ENCODE measurements at regions of chr20 and their contacts with region 1.

Region 1: DNA sequence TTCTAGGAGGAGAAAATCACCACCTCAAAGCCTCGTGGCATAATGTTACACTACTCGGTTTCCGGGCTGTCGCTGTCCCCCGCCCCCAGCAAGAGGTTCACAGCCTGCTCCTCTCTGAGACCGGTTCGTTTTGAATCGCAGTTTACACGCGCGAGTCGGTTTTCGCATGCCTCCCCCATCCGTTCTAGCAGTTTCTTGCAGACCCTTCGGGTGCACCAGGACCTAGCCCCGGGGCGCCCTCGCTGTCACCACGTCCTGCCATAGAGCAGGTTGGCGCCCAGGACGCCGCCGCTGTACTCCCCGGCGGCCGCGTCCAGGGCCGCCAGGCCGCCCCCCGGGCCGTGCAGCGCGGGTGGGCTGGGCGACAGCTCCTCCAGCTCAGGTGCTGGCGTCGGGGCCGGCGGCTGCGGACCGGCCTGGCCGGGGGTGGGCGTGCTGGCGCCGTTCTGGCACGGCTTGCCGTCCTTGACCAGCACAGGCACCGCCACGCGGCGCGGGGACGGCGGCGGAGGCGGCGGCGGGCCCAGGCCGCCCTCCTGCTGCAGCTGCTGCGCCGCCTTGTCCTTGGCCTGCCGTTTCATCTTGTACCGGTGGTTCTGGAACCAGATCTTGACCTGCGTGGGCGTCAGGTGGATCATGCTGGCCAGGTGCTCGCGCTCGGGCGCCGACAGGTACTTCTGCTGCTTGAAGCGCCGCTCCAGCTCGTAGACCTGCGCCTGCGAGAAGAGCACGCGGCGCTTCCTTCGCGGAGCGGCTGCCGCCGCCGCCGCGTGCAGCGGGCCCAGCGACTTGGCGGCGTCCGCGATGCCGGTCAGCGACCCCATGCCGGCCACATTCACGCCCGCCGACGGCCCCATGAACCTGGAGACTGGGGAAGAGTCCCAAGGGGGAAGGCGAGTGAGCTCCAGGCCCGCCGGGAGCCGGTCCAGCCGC is 1.4 kb downstream of the NKX2-4 start:
- DNase-seq: peak; percentile 32 to 72
- ATAC-seq: no peak
- H3K4me3 ChIP-seq: peak overlapping the region; percentile 15 to 16
- H3K27ac ChIP-seq: no peak overlapping the region
- H3K4me1 ChIP-seq: no peaks in the 10 kb centered on the region
- H3K27me3 ChIP-seq: no peaks in the 10 kb centered on the region

Region 2: DNA sequence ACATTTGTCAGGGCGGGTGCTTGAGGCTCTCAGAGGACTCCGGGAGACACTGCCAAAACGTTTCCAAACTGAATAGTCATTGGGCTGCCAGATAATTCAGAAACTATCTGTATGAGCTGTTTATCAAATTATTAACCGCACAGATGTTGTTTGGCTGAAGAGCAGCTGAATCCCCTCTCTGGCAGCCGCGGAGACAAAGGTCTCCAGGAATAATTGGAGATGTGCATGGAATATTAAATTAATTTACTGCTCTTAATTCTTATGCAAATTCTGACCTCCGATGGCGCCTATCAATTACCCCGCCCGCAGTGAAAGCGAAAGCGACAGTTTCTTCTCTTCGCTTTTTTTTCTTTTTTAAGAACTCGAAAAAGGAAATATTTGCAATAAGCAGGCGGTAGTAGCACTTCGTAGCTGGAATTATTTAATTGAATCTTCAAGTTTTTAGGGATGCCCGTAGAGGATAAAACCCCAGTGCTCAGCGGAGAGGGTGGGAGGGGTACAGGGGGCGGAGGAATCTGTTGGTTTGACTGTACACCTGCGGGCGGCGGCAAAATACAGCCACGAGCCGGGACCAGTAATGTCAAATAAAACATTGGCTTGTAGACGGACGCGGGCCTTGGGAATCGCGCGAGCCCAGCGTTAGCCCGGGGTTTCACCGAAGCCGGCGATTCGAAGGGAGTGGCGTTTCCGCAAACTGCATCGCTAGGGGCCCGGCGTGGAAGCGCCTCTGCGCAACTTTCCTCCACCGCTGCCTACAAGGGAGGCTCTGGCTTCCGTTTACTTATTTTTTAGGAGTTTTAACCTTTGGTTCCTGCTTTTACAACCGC is 296.0 kb before region 1 on chr20:
- intact Hi-C with region 1: loop called in 1 of 2 experiments (anchors 10 kb)
- DNase-seq: peak; percentile 72 to 77
- ATAC-seq: no peak
- H3K4me3 ChIP-seq: peak overlapping the region; percentile 24 to 40
- H3K27ac ChIP-seq: no peak overlapping the region
- H3K4me1 ChIP-seq: no peaks in the 10 kb centered on the region
- H3K27me3 ChIP-seq: peaks cover 0 to 1% of the 10 kb centered on the region in 2 donors

Region 3: GRCh38 chr20:21303061-21303871 is 92.7 kb before region 1 on chr20 and contains the start of gene XRN2:
- intact Hi-C with region 1: loop called in 1 of 2 experiments (anchors 5 kb)
- DNase-seq: peak; percentile 98 to 99
- ATAC-seq: peak; percentile 100
- H3K4me3 ChIP-seq: peak within 1 kb of the TSS; percentile 67 to 90
- H3K27ac ChIP-seq: peak within 1 kb of the TSS; percentile 32 to 85
- H3K4me1 ChIP-seq: no peaks in the 10 kb centered on the region
- H3K27me3 ChIP-seq: no peaks in the 10 kb centered on the region
- total RNA-seq, gene XRN2: 44.1 to 48.3 TPM

Region 4: GRCh38 chr20:21323640-21324039 is 72.3 kb before region 1 on chr20:
- intact Hi-C with region 1: no loop called
- DNase-seq: no peak
- ATAC-seq: no peak
- H3K4me3 ChIP-seq: no peak overlapping the region
- H3K27ac ChIP-seq: no peak overlapping the region
- H3K4me1 ChIP-seq: peaks cover 0 to 5% of the 10 kb centered on the region in 2 donors
- H3K27me3 ChIP-seq: no peaks in the 10 kb centered on the region